ENCODE measurements at regions of chr11 and their contacts with region 1.

Region 1: GRCh38 chr11:122108192-122108799 is 7.7 kb downstream of the BLID start:
- H3K4me3 ChIP-seq: no peak overlapping the region
- H3K27ac ChIP-seq: no peak overlapping the region
- H3K4me1 ChIP-seq: no peaks in the 10 kb centered on the region
- CTCF ChIP-seq: no peak

Region 2: GRCh38 chr11:121655537-121656327 is 452.6 kb before region 1 on chr11:
- CTCF ChIA-PET with region 1: interaction called, 19 read pairs
- POLR2A ChIA-PET with region 1: no interaction called
- H3K4me3 ChIP-seq: peak overlapping the region; percentile 34
- H3K27ac ChIP-seq: peak overlapping the region; percentile 58
- H3K4me1 ChIP-seq: no peaks in the 10 kb centered on the region
- CTCF ChIP-seq: peak; percentile 72

Region 3: DNA sequence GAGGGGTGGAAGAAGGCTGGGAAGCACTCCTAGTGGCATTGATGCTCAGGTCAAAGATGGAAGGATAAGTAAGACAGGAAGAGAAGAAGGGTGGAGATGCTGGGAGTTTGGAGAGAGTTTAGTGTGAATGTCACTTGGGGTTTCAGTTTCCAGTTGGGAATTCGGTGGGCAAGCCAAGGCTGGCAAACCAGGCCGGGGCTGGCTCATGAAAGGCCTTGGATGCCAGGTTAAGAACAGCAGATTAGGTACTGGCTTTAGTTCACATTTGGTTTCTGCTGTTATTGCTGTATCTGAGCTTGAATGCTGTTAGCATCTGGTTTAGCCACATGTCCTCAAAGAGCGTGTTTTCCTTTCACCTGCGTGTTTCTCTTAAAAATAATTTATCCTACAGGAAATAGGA is 61.9 kb before region 1 on chr11:
- CTCF ChIA-PET with region 1: no interaction called
- POLR2A ChIA-PET with region 1: no interaction called
- H3K4me3 ChIP-seq: no peak overlapping the region
- H3K27ac ChIP-seq: no peak overlapping the region
- H3K4me1 ChIP-seq: no peaks in the 10 kb centered on the region
- CTCF ChIP-seq: no peak

Region 4: DNA sequence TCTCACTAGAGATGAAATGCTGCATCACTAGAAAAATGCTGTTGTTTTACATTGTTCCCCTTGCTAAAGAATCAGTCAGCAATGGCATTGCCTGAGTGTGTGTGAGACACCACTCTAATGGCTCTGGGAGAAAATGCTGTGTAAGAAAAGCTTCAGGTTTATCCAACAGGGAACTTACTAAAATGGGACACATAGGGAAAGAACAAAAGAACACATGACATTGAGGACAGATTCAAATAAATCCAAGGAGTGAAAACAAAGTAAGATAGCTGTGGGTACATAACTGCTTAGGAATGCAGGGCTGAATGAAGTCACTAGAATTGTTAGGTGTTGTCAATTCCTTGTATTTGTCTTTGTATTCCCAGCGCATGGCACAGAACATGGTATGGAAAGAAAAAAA is 16.5 kb before region 1 on chr11:
- CTCF ChIA-PET with region 1: interaction called, 10 read pairs
- POLR2A ChIA-PET with region 1: no interaction called
- H3K4me3 ChIP-seq: no peak overlapping the region
- H3K27ac ChIP-seq: no peak overlapping the region
- H3K4me1 ChIP-seq: no peaks in the 10 kb centered on the region
- CTCF ChIP-seq: no peak

Region 5: GRCh38 chr11:122126024-122126688 is 17.9 kb after region 1 on chr11:
- CTCF ChIA-PET with region 1: interaction called, 22 read pairs
- POLR2A ChIA-PET with region 1: no interaction called
- H3K4me3 ChIP-seq: no peak overlapping the region
- H3K27ac ChIP-seq: no peak overlapping the region
- H3K4me1 ChIP-seq: no peaks in the 10 kb centered on the region
- CTCF ChIP-seq: no peak

Region 6: GRCh38 chr11:122202951-122203456 is 94.7 kb after region 1 on chr11:
- CTCF ChIA-PET with region 1: interaction called, 64 read pairs
- POLR2A ChIA-PET with region 1: no interaction called
- H3K4me3 ChIP-seq: no peak overlapping the region
- H3K27ac ChIP-seq: no peak overlapping the region
- H3K4me1 ChIP-seq: peaks cover 9% of the 10 kb centered on the region
- CTCF ChIP-seq: 0 out of 2 replicates have a peak, but pooled peaks have one; percentile 30

Region 7: DNA sequence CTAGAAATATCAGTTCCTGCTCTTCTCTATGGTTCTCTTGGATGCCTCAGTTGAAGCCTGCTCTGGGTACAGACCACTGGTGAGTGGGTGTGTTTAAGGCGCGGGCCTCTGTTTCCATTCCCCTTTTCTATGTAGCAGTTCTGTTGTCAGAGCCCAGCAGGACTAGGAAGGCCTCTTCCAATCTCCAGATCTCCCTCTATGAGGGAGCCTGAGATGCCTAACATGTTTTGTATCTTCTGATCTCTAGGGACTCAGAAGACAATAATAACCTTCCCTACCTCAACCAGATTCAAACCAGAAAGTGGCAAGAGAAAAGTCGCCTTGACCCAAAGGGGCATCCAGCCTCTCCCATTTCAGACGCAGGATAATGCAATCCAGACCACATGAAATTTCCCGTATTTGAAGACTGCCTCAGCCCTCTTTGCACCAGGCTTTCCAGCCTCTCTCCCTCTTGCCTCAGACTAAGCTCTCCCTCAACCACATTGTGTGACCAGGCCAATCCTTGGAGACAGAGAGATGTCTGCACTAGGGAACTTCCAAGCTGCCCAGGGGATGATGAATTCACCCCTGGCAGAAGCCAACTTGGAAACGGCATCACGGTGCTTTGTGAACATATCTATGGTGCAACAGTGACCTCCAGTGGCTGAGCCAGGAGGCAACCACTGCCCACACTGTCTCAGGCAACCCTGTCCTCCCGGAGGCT is 397.2 kb after region 1 on chr11:
- CTCF ChIA-PET with region 1: interaction called, 16 read pairs
- POLR2A ChIA-PET with region 1: no interaction called
- H3K4me3 ChIP-seq: no peak overlapping the region
- H3K27ac ChIP-seq: no peak overlapping the region
- H3K4me1 ChIP-seq: no peaks in the 10 kb centered on the region
- CTCF ChIP-seq: peak; percentile 76; the same call in 1 of the 2 replicates